ENCODE measurements at regions of chr10 and their contacts with region 1.

Region 1: GRCh38 chr10:75210282-75211006 is at the start of gene VDAC2:
- DNase-seq: peak; percentile 94
- ATAC-seq: peak; percentile 85
- H3K4me3 Mint-ChIP-seq: peak within 1 kb of the TSS; percentile 98
- H3K27ac Mint-ChIP-seq: peak within 1 kb of the TSS; percentile 100
- H3K4me1 Mint-ChIP-seq: peaks cover 35% of the 10 kb centered on the region
- H3K27me3 Mint-ChIP-seq: no peaks in the 10 kb centered on the region
- total RNA-seq, gene VDAC2: 152 to 159 TPM

Region 2: GRCh38 chr10:75111367-75111906 is 99.0 kb before region 1 on chr10 and contains the start of gene SAMD8:
- CTCF ChIA-PET with region 1: interaction called, 4 read pairs
- POLR2A ChIA-PET with region 1: interaction called, 11 read pairs
- DNase-seq: peak; percentile 98
- ATAC-seq: peak; percentile 90
- H3K4me3 Mint-ChIP-seq: peak within 1 kb of the TSS; percentile 80
- H3K27ac Mint-ChIP-seq: peak within 1 kb of the TSS; percentile 88
- H3K4me1 Mint-ChIP-seq: peaks cover 48% of the 10 kb centered on the region
- H3K27me3 Mint-ChIP-seq: no peaks in the 10 kb centered on the region
- total RNA-seq, gene SAMD8: 17.4 to 18.2 TPM

Region 3: DNA sequence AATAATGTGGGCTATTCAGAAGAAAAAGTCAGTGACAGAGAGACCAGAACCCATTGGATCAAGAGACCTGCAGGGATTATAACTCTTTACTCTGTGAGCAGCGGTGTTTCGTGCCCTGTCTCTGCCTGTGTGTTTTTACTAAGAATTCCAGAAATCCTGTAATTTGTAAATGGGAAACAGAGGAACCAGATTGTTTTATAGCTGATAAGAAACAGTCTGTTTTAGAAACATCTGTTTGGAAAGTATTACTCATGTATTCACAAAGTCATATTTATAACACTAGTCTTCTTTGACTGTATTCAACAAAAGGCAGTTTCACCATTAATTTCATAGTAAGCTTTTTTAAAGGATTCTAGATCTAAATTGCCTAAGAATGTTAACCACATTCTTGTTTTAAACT is 29.9 kb before region 1 on chr10:
- CTCF ChIA-PET with region 1: interaction called, 4 read pairs
- POLR2A ChIA-PET with region 1: interaction called, 10 read pairs
- DNase-seq: no peak
- ATAC-seq: no peak
- H3K4me3 Mint-ChIP-seq: no peak overlapping the region
- H3K27ac Mint-ChIP-seq: no peak overlapping the region
- H3K4me1 Mint-ChIP-seq: peaks cover 27% of the 10 kb centered on the region
- H3K27me3 Mint-ChIP-seq: no peaks in the 10 kb centered on the region

Region 4: DNA sequence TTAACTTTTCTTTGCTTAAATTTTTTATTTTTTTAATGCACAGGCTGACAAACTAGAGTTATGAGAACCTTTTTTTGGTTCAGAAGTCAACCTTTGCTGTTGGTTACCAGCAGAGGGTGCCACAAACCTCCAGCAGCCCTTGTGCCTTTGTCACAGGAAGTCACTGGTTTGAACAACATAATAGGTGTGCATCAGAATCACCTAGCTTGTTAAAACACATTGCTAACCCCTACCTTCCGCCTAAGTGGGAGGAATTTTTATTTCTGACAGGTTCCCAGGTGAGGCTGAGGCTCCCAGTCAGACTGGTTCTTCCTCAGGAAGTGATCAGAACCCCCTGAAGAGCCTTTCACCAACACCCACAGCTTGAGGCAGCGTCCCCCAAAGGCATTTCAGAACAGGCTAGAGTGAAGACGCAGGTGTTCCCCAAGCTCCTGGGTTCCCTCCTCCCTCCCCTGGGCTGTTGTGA is 22.4 kb before region 1 on chr10:
- CTCF ChIA-PET with region 1: interaction called, 58 read pairs
- POLR2A ChIA-PET with region 1: interaction called, 18 read pairs
- DNase-seq: peak; percentile 85
- ATAC-seq: peak; percentile 92
- H3K4me3 Mint-ChIP-seq: no peak overlapping the region
- H3K27ac Mint-ChIP-seq: peak overlapping the region; percentile 93
- H3K4me1 Mint-ChIP-seq: peaks cover 19% of the 10 kb centered on the region
- H3K27me3 Mint-ChIP-seq: no peaks in the 10 kb centered on the region

Region 5: GRCh38 chr10:75223507-75223906 is 13.1 kb after region 1 on chr10:
- CTCF ChIA-PET with region 1: interaction called, 41 read pairs
- POLR2A ChIA-PET with region 1: interaction called, 13 read pairs
- DNase-seq: no peak
- ATAC-seq: no peak
- H3K4me3 Mint-ChIP-seq: no peak overlapping the region
- H3K27ac Mint-ChIP-seq: no peak overlapping the region
- H3K4me1 Mint-ChIP-seq: peaks cover 43% of the 10 kb centered on the region
- H3K27me3 Mint-ChIP-seq: no peaks in the 10 kb centered on the region

Region 6: DNA sequence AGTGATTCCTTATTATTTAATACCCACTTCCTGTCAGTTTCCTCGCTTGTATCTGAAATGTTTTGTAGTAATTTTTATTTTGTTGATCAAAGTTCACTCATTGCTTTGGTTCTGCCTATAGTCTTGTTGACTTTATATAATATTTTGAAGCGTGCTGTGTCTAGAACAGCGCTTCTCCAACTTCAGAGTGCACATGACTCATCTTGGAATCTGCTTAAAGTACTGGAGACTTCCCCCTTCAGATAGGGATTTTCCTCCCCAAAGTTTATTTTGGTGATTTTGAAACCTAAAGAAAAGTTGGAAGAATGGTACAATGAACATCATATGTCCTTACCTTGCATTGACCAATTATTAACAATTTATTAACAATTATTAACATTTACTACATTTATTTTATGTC is 19.5 kb after region 1 on chr10:
- CTCF ChIA-PET with region 1: interaction called, 41 read pairs
- POLR2A ChIA-PET with region 1: interaction called, 61 read pairs
- DNase-seq: no peak
- ATAC-seq: no peak
- H3K4me3 Mint-ChIP-seq: no peak overlapping the region
- H3K27ac Mint-ChIP-seq: no peak overlapping the region
- H3K4me1 Mint-ChIP-seq: peaks cover 54% of the 10 kb centered on the region
- H3K27me3 Mint-ChIP-seq: no peaks in the 10 kb centered on the region

Region 7: DNA sequence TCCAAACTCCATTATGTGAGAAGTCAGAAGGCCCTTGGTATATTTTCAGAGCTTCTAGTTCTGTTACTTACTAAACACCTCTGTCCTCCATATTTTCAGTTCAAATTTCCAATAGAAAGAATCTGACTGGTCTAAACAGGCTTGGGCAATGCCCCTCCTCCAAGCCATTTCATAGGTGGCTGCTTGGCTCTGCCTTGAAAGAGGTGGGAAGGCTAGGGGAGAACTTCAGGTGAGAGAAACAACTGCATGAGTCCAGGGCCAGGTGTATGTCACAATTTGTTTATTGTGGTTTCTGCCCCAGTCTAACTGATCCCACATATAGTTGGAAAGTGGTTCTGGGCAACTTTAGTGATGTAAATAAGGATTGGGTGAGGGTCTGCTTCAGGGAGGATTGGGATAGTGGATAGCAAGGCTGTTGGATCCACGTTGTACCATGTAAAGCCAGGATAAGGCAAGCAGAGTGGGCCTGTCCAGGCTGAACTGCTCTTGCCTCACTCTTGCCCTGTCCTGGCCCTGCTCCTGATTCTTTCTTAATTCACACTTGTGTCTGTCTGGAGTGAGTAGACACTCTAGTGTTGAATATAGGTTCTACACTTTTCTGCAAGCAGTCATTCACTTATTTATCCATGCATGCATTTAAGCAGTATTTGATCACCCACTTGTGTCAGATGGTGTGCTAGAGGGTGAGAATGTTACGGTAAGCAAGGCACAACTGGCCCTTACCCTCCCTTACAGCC is 92.8 kb after region 1 on chr10:
- CTCF ChIA-PET with region 1: no interaction called
- POLR2A ChIA-PET with region 1: no interaction called
- DNase-seq: no peak
- ATAC-seq: no peak
- H3K4me3 Mint-ChIP-seq: no peak overlapping the region
- H3K27ac Mint-ChIP-seq: no peak overlapping the region
- H3K4me1 Mint-ChIP-seq: peaks cover 8% of the 10 kb centered on the region
- H3K27me3 Mint-ChIP-seq: no peaks in the 10 kb centered on the region